Posterior vena cava (tissue), 2 donors: ENCODE measurements at regions of chr20 and their contacts with region 1.

Region 1: DNA sequence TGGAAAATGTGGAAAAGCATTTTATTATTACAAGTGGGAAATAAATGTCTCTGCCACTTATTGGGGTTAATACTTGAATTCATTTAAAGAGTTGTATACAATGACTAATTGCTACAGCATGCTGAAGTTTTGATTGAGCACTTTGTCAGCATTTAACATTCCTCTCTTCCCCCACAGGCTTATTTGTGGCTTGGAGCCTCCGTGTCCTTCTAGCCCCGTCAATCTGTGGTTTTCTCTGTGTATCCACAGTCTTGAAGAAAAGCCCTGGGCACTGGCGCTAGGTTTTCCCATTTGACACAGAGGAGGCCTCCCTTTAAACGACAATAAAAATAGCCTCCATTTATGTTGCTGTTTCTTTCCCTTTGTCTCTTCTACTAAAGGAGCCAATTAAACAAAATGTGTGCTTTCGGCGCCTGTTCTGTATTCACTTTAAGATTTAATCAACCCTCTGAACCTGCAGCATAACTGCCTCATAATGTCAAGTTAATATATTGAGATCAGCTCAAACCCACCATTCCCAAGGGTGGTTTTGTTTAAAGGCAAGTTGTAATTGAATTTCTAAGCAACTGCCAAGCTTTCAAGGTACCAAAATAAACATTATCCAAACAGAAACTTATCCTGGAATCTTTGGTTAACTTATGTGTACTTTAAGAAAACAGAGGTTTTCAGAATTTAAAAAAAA is 326.6 kb upstream of the RNF24 start:
- DNase-seq: no peak

Region 2: GRCh38 chr20:4325548-4326187 is 16.3 kb before region 1 on chr20:
- intact Hi-C with region 1: loop called in 1 of 2 experiments (anchors 1 kb)
- DNase-seq: no peak